HepG2 (cell line): ENCODE measurements at regions of chr4 and their contacts with region 1.

Region 1: DNA sequence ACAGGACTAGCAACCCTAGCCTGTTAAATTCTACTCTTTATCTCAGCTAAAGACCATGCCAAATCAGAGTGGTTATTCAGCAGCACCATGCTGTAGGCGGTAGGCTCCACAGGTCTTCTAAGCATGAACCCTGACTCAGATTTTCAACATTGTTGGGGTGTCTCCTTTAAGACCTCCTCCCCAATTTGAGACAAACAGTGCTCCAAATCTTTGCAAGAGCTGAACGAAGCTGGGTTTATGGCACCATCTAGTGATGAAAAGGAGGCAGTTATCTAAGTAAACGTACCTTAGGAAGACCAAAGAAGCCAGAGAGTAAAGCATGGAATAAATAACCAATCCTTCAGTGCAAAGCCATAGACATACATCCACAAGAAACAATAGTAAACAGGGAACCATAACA is 334.5 kb upstream of the SLC7A11 start:
- DNase-seq: peak; percentile 39
- ATAC-seq: peak; percentile 82
- H3K4me3 ChIP-seq: no peak overlapping the region
- H3K27ac ChIP-seq: no peak overlapping the region
- H3K4me1 ChIP-seq: no peaks in the 10 kb centered on the region
- H3K27me3 ChIP-seq: no peaks in the 10 kb centered on the region
- CTCF ChIP-seq: peak; percentile 65
- EP300 ChIP-seq: no peak
- POLR2A ChIP-seq: no peak
- RAD21 ChIP-seq: peak; percentile 52; the same call in 1 of the 2 replicates

Region 2: GRCh38 chr4:137735561-137736104 is 841.1 kb before region 1 on chr4:
- CTCF ChIA-PET with region 1: interaction called, 4 read pairs
- POLR2A ChIA-PET with region 1: no interaction called
- in situ Hi-C with region 1: no loop called
- intact Hi-C with region 1: loop called (anchors 1 kb)
- DNase-seq: no peak
- ATAC-seq: peak; percentile 27; the same call in 1 of the 3 replicates
- H3K4me3 ChIP-seq: no peak overlapping the region
- H3K27ac ChIP-seq: no peak overlapping the region
- H3K4me1 ChIP-seq: no peaks in the 10 kb centered on the region
- H3K27me3 ChIP-seq: no peaks in the 10 kb centered on the region
- CTCF ChIP-seq: no peak
- EP300 ChIP-seq: no peak
- POLR2A ChIP-seq: no peak
- RAD21 ChIP-seq: no peak

Region 3: DNA sequence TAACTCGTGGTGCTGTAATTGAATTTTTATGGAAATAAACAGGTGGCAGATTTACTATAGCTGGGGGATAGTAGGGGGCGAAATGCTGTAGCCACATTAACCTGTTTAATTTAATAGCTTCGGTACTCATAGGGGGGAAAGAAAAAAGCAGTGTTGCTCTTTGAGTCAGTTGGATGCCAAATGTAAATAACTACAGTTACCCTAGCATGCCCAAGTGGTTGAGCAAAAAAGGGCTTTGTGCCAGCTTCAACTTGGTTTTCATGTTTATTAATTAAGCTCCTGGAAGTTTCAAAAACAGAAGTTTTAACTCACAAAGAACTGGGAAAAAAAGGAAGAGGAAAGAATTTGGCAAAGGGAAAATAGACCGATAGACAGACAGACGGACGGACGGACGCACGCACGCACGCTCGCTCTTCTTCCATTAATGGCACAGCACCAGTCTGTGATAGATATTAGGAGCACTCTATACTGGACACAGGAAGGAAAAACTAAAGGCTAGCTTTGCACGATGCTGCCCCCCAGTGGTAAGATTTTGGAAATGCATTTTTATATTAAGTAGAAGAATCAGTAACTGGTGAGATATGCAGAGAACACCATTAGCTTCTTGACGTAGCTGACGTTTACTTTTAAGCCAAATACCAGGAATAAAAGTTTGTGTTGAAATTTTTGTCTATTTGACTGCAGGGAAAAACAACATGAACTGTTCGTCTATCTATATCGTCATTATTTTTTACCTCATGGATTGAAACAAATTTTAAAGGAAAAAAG is 486.4 kb before region 1 on chr4:
- CTCF ChIA-PET with region 1: no interaction called
- POLR2A ChIA-PET with region 1: no interaction called
- in situ Hi-C with region 1: no loop called
- intact Hi-C with region 1: loop called (anchors 2 kb)
- DNase-seq: peak; percentile 64
- ATAC-seq: peak; percentile 87
- H3K4me3 ChIP-seq: peak overlapping the region in 1 of 3 experiments; percentile 24; a peak in 1 of 6 replicates
- H3K27ac ChIP-seq: no peak overlapping the region
- H3K4me1 ChIP-seq: peaks cover 30% of the 10 kb centered on the region
- H3K27me3 ChIP-seq: no peaks in the 10 kb centered on the region
- CTCF ChIP-seq: peak; percentile 80
- EP300 ChIP-seq: no peak
- POLR2A ChIP-seq: no peak
- RAD21 ChIP-seq: 0 out of 2 replicates have a peak, but pooled peaks have one; percentile 45

Region 4: GRCh38 chr4:138595731-138596460 is 19.2 kb after region 1 on chr4:
- CTCF ChIA-PET with region 1: no interaction called
- POLR2A ChIA-PET with region 1: no interaction called
- in situ Hi-C with region 1: no loop called
- intact Hi-C with region 1: no loop called
- DNase-seq: no peak
- ATAC-seq: no peak
- H3K4me3 ChIP-seq: no peak overlapping the region
- H3K27ac ChIP-seq: no peak overlapping the region
- H3K4me1 ChIP-seq: no peaks in the 10 kb centered on the region
- H3K27me3 ChIP-seq: no peaks in the 10 kb centered on the region; a peak in 1 of 5 replicates
- CTCF ChIP-seq: no peak
- EP300 ChIP-seq: no peak
- POLR2A ChIP-seq: no peak
- RAD21 ChIP-seq: no peak

Region 5: GRCh38 chr4:138669479-138670315 is 93.0 kb after region 1 on chr4:
- CTCF ChIA-PET with region 1: no interaction called
- POLR2A ChIA-PET with region 1: no interaction called
- in situ Hi-C with region 1: loop called (anchors 10 kb)
- intact Hi-C with region 1: no loop called
- DNase-seq: no peak
- ATAC-seq: no peak
- H3K4me3 ChIP-seq: no peak overlapping the region
- H3K27ac ChIP-seq: no peak overlapping the region
- H3K4me1 ChIP-seq: peaks cover 19% of the 10 kb centered on the region
- H3K27me3 ChIP-seq: 0 out of 5 replicates have a peak, but pooled peaks cover 0 to 5% of the 10 kb centered on the region in 2 experiments
- CTCF ChIP-seq: no peak
- EP300 ChIP-seq: no peak
- POLR2A ChIP-seq: no peak
- RAD21 ChIP-seq: no peak

Region 6: GRCh38 chr4:138870737-138871554 is 294.3 kb after region 1 on chr4:
- CTCF ChIA-PET with region 1: interaction called, 3 read pairs
- POLR2A ChIA-PET with region 1: no interaction called
- in situ Hi-C with region 1: loop called (anchors 10 kb)
- intact Hi-C with region 1: loop called (anchors 1 kb)
- DNase-seq: peak; percentile 55
- ATAC-seq: peak; percentile 84
- H3K4me3 ChIP-seq: no peak overlapping the region
- H3K27ac ChIP-seq: no peak overlapping the region
- H3K4me1 ChIP-seq: no peaks in the 10 kb centered on the region
- H3K27me3 ChIP-seq: peaks cover 0 to 13% of the 10 kb centered on the region in 2 experiments; a peak in 3 of 5 replicates
- CTCF ChIP-seq: peak; percentile 82
- EP300 ChIP-seq: no peak
- POLR2A ChIP-seq: no peak
- RAD21 ChIP-seq: peak; percentile 84

Region 7: DNA sequence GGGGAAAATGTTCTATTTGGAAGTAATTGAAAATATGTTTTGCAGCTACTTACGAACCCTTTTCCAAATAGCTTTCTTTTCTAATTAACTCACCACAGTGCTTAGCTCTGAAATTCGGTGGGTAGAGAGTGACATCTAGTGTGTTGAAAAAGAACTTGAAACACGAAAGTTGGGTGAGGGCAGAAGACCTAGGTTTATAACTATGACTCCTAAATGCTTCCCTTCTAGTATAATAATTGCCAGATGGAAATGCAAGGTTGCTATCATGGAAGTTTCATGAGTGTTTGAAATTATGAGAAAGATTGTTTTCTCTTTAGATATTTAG is 361.6 kb after region 1 on chr4:
- CTCF ChIA-PET with region 1: interaction called, 3 read pairs
- POLR2A ChIA-PET with region 1: no interaction called
- in situ Hi-C with region 1: no loop called
- intact Hi-C with region 1: loop called (anchors 1 kb)
- DNase-seq: peak; percentile 27
- ATAC-seq: peak; percentile 86
- H3K4me3 ChIP-seq: no peak overlapping the region
- H3K27ac ChIP-seq: no peak overlapping the region
- H3K4me1 ChIP-seq: peaks cover 27% of the 10 kb centered on the region
- H3K27me3 ChIP-seq: peaks cover 0 to 1% of the 10 kb centered on the region in 2 experiments; a peak in 1 of 5 replicates
- CTCF ChIP-seq: peak; percentile 73
- EP300 ChIP-seq: no peak
- POLR2A ChIP-seq: no peak
- RAD21 ChIP-seq: peak; percentile 46; the same call in 1 of the 2 replicates